ENCODE measurements at regions of chr11 and their contacts with region 1.

Region 1: DNA sequence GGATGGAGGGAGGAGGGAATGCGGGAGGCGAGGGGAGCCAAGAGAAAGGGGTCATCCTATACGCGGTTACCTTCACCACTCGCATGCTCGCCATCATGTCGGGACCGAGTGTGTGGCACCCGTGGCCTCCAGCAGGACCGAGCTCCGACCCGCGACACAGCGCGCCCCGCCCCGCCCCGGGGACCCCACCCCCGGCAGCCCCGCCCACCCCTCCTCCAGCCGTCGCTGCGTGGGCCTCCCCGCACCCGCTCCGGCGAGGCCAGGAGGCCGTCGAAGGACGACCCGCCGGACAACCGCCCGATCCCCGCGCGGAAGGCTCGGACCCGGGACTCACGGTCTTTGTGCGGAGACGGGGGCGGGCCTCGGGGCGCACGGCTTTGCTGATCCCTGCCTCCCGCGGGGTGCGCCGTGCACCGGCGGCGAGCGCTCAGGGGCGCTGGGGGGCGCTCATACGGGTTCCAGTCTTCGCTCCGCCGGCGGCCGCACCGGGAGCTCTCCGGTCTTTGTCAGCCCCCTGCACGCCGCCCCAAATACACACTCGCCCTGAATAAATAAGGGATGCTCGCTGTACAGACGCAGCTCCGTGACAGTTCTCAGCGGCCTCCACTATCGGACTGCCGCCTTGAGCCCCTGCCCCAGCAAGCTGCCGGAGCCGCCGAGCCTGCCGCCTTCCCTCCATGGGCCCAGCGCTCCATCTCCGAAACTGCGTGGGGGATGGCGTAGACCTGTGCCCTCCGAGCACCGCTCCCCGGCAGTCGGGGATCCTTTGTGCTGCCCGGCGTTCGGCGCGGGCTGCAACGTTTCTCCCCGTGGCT is at the start of gene UBE2L6:
- DNase-seq: peak; percentile 84
- H3K4me3 ChIP-seq: peak within 1 kb of the TSS; percentile 81
- H3K27ac ChIP-seq: peak within 1 kb of the TSS; percentile 79
- H3K4me1 ChIP-seq: peaks cover 18% of the 10 kb centered on the region
- CTCF ChIP-seq: peak; percentile 95; the same call in 1 of the 2 replicates
- total RNA-seq, gene UBE2L6: 64.7 and 68.9 TPM in 2 replicates

Region 2: GRCh38 chr11:57546869-57547475 is 20.8 kb before region 1 on chr11:
- CTCF ChIA-PET with region 1: no interaction called
- POLR2A ChIA-PET with region 1: no interaction called
- intact Hi-C with region 1: no loop called
- DNase-seq: no peak
- H3K4me3 ChIP-seq: no peak overlapping the region
- H3K27ac ChIP-seq: no peak overlapping the region
- H3K4me1 ChIP-seq: peaks cover 9% of the 10 kb centered on the region
- CTCF ChIP-seq: no peak

Region 3: GRCh38 chr11:57800444-57801182 is 232.9 kb after region 1 on chr11:
- CTCF ChIA-PET with region 1: interaction called, 7 read pairs
- POLR2A ChIA-PET with region 1: interaction called, 3 read pairs
- intact Hi-C with region 1: loop called (anchors 2 kb)
- DNase-seq: peak; percentile 74
- H3K4me3 ChIP-seq: no peak overlapping the region
- H3K27ac ChIP-seq: no peak overlapping the region
- H3K4me1 ChIP-seq: peaks cover 12% of the 10 kb centered on the region
- CTCF ChIP-seq: peak; percentile 94

Region 4: GRCh38 chr11:58524232-58525036 is 956.7 kb after region 1 on chr11:
- CTCF ChIA-PET with region 1: no interaction called
- POLR2A ChIA-PET with region 1: no interaction called
- intact Hi-C with region 1: loop called (anchors 5 kb)
- DNase-seq: peak; percentile 81
- H3K4me3 ChIP-seq: peak overlapping the region; percentile 22
- H3K27ac ChIP-seq: peak overlapping the region; percentile 85
- H3K4me1 ChIP-seq: peaks cover 39% of the 10 kb centered on the region
- CTCF ChIP-seq: peak; percentile 98

Region 5: DNA sequence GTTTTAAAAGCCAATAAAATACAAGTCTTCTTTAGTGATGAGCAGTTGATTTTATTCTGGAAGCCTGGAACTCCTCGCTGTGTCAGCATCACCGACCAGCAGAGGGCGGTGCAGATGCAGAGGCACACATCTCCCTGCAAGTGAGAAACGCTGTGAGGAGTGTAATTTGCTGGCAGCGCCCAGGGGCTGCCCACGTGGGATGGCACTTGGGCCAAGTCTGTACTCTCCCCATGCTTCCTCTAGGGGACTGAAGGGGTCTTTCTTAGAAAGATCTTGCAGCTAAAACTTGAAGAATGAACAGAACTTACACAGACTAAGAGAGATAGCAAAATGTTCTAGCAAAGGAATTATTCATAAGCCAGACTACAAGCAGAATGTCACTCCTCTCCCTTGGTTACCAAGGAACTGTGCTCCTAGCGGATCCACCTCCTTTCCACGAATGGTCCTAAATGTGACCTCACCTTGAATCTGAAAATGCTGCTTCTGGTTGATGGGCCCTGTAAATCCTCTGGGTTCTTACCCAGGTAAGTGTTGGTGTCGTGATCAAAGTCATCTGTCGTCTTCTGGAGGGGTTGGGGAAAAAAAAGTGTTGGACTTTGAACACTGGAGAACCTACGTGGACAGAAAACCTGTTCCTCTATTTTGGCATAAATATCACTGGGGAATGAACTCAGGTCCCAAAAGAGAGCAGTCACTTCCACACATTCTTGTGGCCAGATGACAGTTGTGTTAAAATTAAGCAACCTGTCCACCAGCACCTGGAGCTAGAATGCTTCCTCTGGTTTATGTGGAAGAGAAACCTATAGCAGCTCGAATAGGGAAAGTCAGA is 1086.6 kb after region 1 on chr11:
- CTCF ChIA-PET with region 1: no interaction called
- POLR2A ChIA-PET with region 1: no interaction called
- intact Hi-C with region 1: no loop called
- DNase-seq: peak; percentile 81
- H3K4me3 ChIP-seq: no peak overlapping the region
- H3K27ac ChIP-seq: no peak overlapping the region
- H3K4me1 ChIP-seq: no peaks in the 10 kb centered on the region
- CTCF ChIP-seq: peak; percentile 96